Activated B cell treated with CpG ODN at 0.5 μM for 24 hours (primary cell): ENCODE measurements at regions of chr5 and their contacts with region 1.

Region 1: DNA sequence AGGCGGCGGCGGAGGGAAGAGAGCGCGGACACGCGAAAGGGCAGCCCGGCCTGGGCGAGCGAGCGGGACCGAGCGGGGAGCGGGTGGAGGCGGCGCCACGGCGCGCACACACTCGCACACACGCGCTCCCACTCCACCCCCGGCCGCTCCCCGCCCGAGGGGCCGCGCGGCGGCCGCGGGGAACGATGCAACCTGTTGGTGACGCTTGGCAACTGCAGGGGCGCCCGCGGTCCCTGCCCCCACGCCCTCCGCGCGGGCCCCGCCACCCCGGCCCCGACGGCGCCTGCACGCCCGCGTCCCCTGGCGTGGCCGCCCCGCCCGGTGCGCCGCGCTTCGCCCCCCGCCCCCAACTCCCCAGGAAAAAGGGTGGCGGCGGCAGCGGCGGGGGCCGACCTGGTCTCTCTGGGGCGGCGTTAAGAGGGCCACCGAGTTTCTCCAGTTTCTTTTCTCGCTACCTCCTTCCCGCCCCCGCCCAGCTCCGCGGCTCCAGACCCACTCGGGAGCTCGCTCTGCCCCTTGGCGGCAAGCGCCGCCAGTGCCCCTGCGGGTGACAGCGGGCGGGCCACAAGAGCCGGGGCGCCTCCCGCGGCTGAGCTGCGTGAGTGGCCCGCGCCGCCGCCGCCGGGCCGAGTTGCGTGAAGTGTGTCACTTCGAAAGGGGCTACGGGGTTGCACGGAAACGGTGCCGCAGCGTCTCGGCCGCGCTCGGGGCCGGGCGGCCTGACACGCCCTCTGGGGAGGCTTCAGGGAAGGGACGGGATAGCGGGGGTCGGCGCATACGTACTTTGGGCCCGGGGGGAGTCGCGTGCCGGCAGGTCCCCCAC is at the start of gene NR3C1:
- DNase-seq: peak; percentile 87
- ATAC-seq: peak; percentile 72
- H3K4me3 Mint-ChIP-seq: peak within 1 kb of the TSS; percentile 95
- H3K27ac Mint-ChIP-seq: peak within 1 kb of the TSS; percentile 100
- H3K4me1 Mint-ChIP-seq: peaks cover 45% of the 10 kb centered on the region
- H3K27me3 Mint-ChIP-seq: no peaks in the 10 kb centered on the region
- CTCF ChIP-seq: no peak
- total RNA-seq, gene NR3C1: 105 and 110 TPM in 2 replicates

Region 2: DNA sequence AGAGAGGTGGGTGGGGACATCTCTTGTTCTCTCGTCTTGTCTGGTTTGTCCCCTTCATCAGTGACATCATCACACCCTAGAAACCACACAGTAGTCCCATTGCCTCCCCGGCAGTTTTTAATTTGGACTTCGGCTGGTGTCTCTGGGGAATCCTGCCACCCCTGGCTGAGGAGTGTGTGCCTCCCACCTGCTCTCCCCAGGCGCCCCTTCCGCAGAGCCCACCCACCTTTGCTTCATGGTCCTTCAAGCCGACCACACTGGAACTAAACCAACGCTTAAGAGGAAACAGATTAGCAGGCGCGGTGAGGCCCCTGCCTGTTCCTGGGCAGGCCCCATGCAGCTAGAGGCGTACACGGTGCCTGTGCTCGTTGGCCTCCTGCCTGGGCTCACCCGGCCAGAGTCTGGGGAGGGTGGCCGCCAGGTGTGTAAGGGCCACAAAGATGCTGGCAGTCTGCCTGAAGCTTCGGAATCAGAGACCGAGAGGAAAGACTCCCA is 971.4 kb before region 1 on chr5:
- CTCF ChIA-PET with region 1: no interaction called
- POLR2A ChIA-PET with region 1: no interaction called
- intact Hi-C with region 1: no loop called
- DNase-seq: no peak
- ATAC-seq: peak; percentile 47
- H3K4me3 Mint-ChIP-seq: peak overlapping the region; percentile 47
- H3K27ac Mint-ChIP-seq: peak overlapping the region; percentile 62
- H3K4me1 Mint-ChIP-seq: peaks cover 22% of the 10 kb centered on the region
- H3K27me3 Mint-ChIP-seq: no peaks in the 10 kb centered on the region
- CTCF ChIP-seq: no peak

Region 3: DNA sequence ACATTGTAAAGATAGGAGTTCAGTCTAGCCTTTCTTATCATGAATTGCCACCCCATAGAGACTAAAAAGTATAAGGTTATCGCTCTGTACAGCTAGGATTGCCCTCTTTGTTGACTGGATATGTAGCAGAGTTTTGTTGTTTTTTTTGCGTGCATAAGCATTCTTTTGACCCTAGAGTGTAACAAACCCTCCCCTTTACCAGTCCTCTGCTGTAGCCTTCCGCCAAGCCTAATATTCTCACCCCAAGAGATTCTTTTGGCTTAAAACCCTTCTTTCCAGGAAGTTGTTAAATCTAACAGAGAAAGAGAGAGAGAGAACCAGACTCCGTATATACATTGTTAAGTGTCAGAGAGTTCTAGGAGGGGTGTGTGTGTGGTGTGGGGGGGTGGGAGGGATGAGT is 831.8 kb before region 1 on chr5:
- CTCF ChIA-PET with region 1: no interaction called
- POLR2A ChIA-PET with region 1: no interaction called
- intact Hi-C with region 1: no loop called
- DNase-seq: no peak
- ATAC-seq: no peak
- H3K4me3 Mint-ChIP-seq: no peak overlapping the region
- H3K27ac Mint-ChIP-seq: no peak overlapping the region
- H3K4me1 Mint-ChIP-seq: no peaks in the 10 kb centered on the region
- H3K27me3 Mint-ChIP-seq: peaks cover 8% of the 10 kb centered on the region
- CTCF ChIP-seq: no peak

Region 4: GRCh38 chr5:142922223-142922952 is 481.4 kb before region 1 on chr5:
- CTCF ChIA-PET with region 1: interaction called, 7 read pairs
- POLR2A ChIA-PET with region 1: interaction called, 8 read pairs
- intact Hi-C with region 1: loop called (anchors 1 kb)
- DNase-seq: no peak
- ATAC-seq: no peak
- H3K4me3 Mint-ChIP-seq: no peak overlapping the region
- H3K27ac Mint-ChIP-seq: no peak overlapping the region
- H3K4me1 Mint-ChIP-seq: peaks cover 7% of the 10 kb centered on the region
- H3K27me3 Mint-ChIP-seq: no peaks in the 10 kb centered on the region
- CTCF ChIP-seq: no peak

Region 5: GRCh38 chr5:143222287-143223231 is 181.2 kb before region 1 on chr5:
- CTCF ChIA-PET with region 1: interaction called, 3 read pairs
- POLR2A ChIA-PET with region 1: interaction called, 9 read pairs
- intact Hi-C with region 1: loop called (anchors 2 kb)
- DNase-seq: peak; percentile 20
- ATAC-seq: peak; percentile 91
- H3K4me3 Mint-ChIP-seq: peak overlapping the region; percentile 64
- H3K27ac Mint-ChIP-seq: peak overlapping the region; percentile 75
- H3K4me1 Mint-ChIP-seq: peaks cover 39% of the 10 kb centered on the region
- H3K27me3 Mint-ChIP-seq: no peaks in the 10 kb centered on the region
- CTCF ChIP-seq: no peak

Region 6: DNA sequence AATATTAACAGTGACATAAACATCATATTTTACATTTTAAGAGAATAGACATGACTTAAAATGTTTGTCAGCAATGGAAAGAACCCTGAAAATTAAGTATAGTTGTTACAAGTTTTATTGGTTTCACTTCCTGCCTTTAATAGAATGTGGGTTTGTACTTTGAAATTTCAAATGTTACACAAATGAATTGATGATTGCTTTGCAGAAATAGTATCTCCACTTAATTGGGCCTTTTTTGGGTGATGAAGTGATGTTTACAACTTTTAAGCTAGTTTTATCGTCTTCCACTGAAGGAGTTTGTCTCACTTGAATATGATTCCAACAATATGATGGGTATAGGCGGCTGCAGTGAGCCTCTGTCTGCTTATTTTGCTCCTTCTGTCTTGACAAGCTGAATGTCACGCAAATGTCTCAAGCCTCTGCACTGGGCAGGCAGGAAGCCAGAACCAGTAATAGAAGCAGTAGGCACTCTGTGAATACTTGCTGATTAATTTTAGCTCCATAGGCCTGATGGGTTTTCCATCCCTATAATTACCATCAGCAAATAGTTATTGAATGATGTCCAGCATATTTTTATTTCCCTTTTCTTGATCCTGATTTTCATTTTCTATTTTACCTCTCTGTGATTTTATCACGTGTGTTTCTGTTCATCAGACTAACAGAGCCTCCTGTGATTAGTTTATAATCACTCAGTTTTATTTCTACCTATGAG is 10.3 kb after region 1 on chr5:
- CTCF ChIA-PET with region 1: interaction called, 10 read pairs
- POLR2A ChIA-PET with region 1: interaction called, 42 read pairs
- intact Hi-C with region 1: no loop called
- DNase-seq: no peak
- ATAC-seq: peak; percentile 85
- H3K4me3 Mint-ChIP-seq: peak overlapping the region; percentile 29
- H3K27ac Mint-ChIP-seq: peak overlapping the region; percentile 64
- H3K4me1 Mint-ChIP-seq: peaks cover 40% of the 10 kb centered on the region
- H3K27me3 Mint-ChIP-seq: no peaks in the 10 kb centered on the region
- CTCF ChIP-seq: no peak

Region 7: GRCh38 chr5:143582869-143583268 is 179.1 kb after region 1 on chr5:
- CTCF ChIA-PET with region 1: no interaction called
- POLR2A ChIA-PET with region 1: interaction called, 10 read pairs
- intact Hi-C with region 1: no loop called
- DNase-seq: no peak
- ATAC-seq: peak; percentile 34
- H3K4me3 Mint-ChIP-seq: peak overlapping the region; percentile 2
- H3K27ac Mint-ChIP-seq: peak overlapping the region; percentile 38
- H3K4me1 Mint-ChIP-seq: peaks cover 36% of the 10 kb centered on the region
- H3K27me3 Mint-ChIP-seq: no peaks in the 10 kb centered on the region
- CTCF ChIP-seq: no peak

Region 8: GRCh38 chr5:144170276-144171024 is 766.6 kb after region 1 on chr5 and contains the starts of genes KCTD16 and YIPF5:
- CTCF ChIA-PET with region 1: no interaction called
- POLR2A ChIA-PET with region 1: interaction called, 6 read pairs
- intact Hi-C with region 1: loop called (anchors 1 kb)
- DNase-seq: peak; percentile 91
- ATAC-seq: peak; percentile 98
- H3K4me3 Mint-ChIP-seq: peak within 1 kb of the TSS; percentile 90
- H3K27ac Mint-ChIP-seq: peak within 1 kb of the TSS; percentile 90
- H3K4me1 Mint-ChIP-seq: peaks cover 29% of the 10 kb centered on the region
- H3K27me3 Mint-ChIP-seq: peaks cover 3% of the 10 kb centered on the region
- CTCF ChIP-seq: no peak
- total RNA-seq, gene KCTD16: not detected in 2 replicates
- total RNA-seq, gene YIPF5: 28.0 and 29.4 TPM in 2 replicates